GM10248 (cell line): ENCODE measurements at regions of chrX and their contacts with region 1.

Region 1: DNA sequence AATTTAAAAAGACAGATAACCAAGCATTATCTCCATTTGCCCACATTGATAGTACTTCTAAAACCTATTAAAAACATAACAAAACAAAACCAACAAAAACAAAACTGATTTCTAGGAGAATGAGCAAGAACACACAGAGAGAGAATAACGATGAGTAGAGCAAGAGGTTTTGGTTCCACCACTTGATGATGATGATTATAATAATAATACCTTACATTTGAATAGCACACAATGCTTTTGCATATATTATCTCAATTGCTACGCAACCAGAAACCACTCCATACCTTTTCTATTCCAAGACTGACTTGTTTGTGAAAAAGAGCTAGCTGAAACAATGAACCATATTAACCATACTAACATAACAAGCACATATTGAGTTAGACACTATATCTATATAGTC is 1090.9 kb downstream of the SH3BGRL start:
- DNase-seq: no peak
- CTCF ChIP-seq: no peak

Region 2: DNA sequence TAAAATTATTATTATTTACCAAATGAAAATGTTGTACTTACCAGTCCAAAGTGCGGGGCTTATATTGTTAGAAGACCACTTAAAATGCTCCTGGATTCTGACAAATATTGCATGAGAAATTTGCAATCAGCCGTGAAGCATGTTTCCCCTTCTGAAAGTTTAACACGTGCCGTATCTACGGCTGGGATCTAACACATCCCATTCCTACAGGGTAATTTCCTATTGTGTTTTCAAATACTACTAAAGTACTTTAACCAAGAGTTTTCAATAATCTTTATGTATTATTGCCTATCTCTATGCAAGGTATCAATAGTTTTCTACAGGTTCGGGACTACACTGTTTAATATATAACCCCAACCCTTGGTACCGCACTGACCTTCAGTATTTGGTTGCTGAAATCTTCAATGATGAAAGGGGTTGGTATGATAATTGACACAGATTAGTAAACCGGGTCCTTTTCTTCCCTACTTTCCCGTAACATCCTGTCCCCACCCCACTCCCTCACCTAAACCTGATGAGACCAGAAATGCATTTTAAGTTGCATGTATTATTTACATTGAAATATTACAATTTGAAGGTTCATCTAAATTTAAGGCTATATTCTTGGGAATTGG is 1482.3 kb before region 1 on chrX:
- CTCF ChIA-PET with region 1: no interaction called
- POLR2A ChIA-PET with region 1: interaction called, 10 read pairs
- DNase-seq: no peak
- CTCF ChIP-seq: no peak